SK-N-SH (cell line): ENCODE measurements at regions of chr22 and their contacts with region 1.

Region 1: DNA sequence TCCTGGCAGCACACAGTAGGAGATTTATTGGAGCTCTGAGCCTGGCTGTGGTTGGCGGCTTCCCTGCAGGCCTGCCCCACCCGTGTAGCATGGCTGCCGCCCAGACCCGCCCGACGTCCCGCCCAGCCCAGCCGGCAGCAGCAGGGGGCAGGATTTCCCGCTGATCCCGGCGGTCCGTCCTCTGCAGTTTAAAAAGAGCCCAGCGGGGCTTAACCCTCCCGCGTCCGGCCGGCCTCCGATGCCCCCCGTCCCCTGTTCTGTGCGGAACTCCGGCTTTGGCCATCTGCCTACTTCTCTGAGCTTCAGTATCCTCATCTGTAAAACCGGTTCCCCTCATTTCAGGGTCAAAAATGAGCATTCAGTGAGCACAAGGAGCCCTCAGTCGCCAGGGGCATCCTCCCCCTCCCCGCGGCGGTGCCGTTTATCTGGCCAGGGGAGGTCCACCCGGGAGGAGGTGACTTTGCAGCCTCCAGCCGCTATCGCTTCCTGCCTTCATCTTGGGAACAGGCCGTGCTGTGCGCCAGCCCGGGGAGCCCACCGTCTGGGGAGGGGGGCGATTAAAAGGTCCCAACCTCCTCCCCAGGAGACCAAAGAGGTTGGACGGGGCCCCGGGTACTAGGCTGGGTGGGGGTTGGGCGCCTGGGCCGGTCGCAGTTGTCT is at the start of gene GAS2L1:
- DNase-seq: peak; percentile 96
- H3K4me3 ChIP-seq: peak within 1 kb of the TSS; percentile 74 to 85
- H3K27ac ChIP-seq: peak within 1 kb of the TSS; percentile 88 to 89
- H3K4me1 ChIP-seq: peaks cover 15 to 51% of the 10 kb centered on the region in 2 experiments; a peak in 3 of 4 replicates
- H3K27me3 ChIP-seq: no peaks in the 10 kb centered on the region
- CTCF ChIP-seq: peak; percentile 61
- EP300 ChIP-seq: no peak; a peak in 1 of 4 replicates
- RAD21 ChIP-seq: peak; percentile 65
- polyA plus RNA-seq, gene GAS2L1: 16.8 and 21.8 TPM in 2 replicates

Region 2: GRCh38 chr22:29320546-29320945 is 14.2 kb after region 1 on chr22:
- CTCF ChIA-PET with region 1: interaction called, 35 read pairs
- POLR2A ChIA-PET with region 1: no interaction called
- DNase-seq: no peak
- H3K4me3 ChIP-seq: no peak overlapping the region
- H3K27ac ChIP-seq: no peak overlapping the region
- H3K4me1 ChIP-seq: no peaks in the 10 kb centered on the region
- H3K27me3 ChIP-seq: peaks cover 8% of the 10 kb centered on the region; the same call in 1 of the 2 replicates
- CTCF ChIP-seq: peak; percentile 38
- EP300 ChIP-seq: no peak
- RAD21 ChIP-seq: peak; percentile 38

Region 3: DNA sequence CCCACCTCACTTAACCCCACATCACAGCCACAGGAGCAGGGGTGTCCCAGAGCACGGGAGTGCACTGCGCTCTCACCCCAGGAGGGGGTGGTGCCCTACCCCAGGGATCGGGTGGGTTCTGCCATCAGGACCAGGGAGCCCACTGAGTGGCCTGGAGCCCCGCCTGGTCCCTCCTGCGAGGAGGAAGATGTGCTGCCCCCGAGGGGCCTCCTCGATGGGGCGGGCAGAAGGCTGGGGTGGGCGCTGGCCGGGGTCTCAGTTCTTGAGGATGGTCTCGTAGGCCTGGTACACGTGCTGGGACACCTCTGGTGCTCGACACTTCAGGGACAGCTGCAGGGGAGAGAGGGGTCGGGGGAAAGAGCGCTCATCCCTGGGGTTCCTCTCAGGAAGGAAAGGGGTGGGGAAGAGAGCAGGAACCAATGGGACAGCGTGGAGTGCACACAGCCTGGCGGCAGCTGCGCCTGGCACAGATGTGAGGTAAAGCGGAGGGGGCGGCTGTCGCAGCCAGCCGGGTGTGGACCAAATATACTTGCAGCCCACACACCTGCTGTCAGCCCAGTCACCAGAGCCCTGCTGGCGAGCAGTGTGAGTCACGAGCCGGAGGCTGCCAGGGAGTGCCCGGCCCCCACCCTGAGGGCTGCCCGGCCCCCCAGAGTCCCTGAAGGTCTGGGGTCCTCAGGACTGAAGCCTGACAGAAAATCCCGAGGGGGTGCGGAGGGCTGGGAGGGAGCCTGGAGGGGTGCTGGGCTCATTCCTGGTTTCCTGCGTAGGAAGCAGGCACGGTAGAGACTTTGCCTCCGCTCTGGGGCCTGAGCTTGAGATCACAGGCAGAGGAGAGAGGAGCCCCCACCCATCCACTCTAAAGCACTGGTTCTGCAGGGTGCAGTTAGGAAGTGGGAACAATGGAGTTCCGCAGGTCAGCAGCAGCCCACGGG is 22.5 kb after region 1 on chr22:
- CTCF ChIA-PET with region 1: interaction called, 35 read pairs
- POLR2A ChIA-PET with region 1: no interaction called
- DNase-seq: no peak
- H3K4me3 ChIP-seq: no peak overlapping the region
- H3K27ac ChIP-seq: no peak overlapping the region
- H3K4me1 ChIP-seq: peaks cover 0 to 18% of the 10 kb centered on the region in 2 experiments; a peak in 1 of 4 replicates
- H3K27me3 ChIP-seq: no peaks in the 10 kb centered on the region
- CTCF ChIP-seq: no peak
- EP300 ChIP-seq: no peak
- RAD21 ChIP-seq: no peak

Region 4: DNA sequence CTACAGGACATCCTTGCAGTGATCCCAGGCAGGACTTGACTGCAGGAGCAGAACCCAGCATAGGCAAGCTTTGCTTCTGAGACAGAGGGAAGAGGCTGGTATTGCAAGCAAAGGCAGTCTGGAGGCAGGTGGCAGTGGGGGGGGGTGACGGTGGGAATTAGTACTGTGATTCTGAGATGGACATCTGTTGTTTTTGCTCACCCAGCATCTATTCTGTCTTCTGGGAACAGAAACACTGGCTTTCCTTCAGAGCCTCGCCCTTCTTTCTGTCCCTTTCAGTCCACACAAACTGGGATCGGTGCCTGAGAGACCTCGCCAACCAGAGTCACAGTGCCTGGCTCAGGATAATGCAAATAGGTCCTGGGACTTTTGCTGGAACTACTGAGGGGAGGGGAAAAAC is 40.4 kb after region 1 on chr22:
- CTCF ChIA-PET with region 1: interaction called, 11 read pairs
- POLR2A ChIA-PET with region 1: no interaction called
- DNase-seq: no peak
- H3K4me3 ChIP-seq: no peak overlapping the region
- H3K27ac ChIP-seq: peak overlapping the region in 1 of 2 experiments; percentile 66; a peak in 1 of 4 replicates
- H3K4me1 ChIP-seq: peaks cover 20 to 49% of the 10 kb centered on the region in 2 experiments
- H3K27me3 ChIP-seq: no peaks in the 10 kb centered on the region
- CTCF ChIP-seq: no peak
- EP300 ChIP-seq: no peak
- RAD21 ChIP-seq: no peak

Region 5: GRCh38 chr22:29359469-29359868 is 53.2 kb after region 1 on chr22:
- CTCF ChIA-PET with region 1: interaction called, 63 read pairs
- POLR2A ChIA-PET with region 1: no interaction called
- DNase-seq: peak; percentile 81
- H3K4me3 ChIP-seq: no peak overlapping the region; a peak in 1 of 4 replicates
- H3K27ac ChIP-seq: no peak overlapping the region
- H3K4me1 ChIP-seq: peaks cover 0 to 4% of the 10 kb centered on the region in 2 experiments; a peak in 1 of 4 replicates
- H3K27me3 ChIP-seq: no peaks in the 10 kb centered on the region
- CTCF ChIP-seq: peak; percentile 70
- EP300 ChIP-seq: no peak
- RAD21 ChIP-seq: peak; percentile 83

Region 6: DNA sequence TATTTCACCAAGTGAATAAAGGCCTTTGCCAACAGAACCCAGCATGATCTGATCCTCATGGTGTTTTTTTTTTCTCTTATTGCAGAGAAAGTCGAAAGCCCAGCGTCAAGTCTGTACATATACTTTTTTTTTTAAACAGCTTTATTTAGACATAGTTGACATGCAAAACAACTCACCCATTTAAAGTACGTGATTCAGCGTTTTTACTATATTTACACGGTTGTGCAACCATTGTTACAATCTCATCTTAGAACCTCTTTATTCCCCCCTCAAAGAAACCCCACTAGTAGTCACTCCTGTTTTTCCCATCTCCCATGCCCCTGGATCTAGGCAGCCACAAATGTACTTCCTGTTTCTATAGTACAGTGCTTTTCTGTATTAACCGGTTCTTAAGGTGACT is 102.6 kb after region 1 on chr22:
- CTCF ChIA-PET with region 1: no interaction called
- POLR2A ChIA-PET with region 1: no interaction called
- DNase-seq: no peak
- H3K4me3 ChIP-seq: no peak overlapping the region
- H3K27ac ChIP-seq: no peak overlapping the region
- H3K4me1 ChIP-seq: no peaks in the 10 kb centered on the region
- H3K27me3 ChIP-seq: no peaks in the 10 kb centered on the region; the same call in 1 of the 2 replicates
- CTCF ChIP-seq: no peak
- EP300 ChIP-seq: no peak
- RAD21 ChIP-seq: no peak